ENCODE measurements at regions of chr14 and their contacts with region 1.

Region 1: DNA sequence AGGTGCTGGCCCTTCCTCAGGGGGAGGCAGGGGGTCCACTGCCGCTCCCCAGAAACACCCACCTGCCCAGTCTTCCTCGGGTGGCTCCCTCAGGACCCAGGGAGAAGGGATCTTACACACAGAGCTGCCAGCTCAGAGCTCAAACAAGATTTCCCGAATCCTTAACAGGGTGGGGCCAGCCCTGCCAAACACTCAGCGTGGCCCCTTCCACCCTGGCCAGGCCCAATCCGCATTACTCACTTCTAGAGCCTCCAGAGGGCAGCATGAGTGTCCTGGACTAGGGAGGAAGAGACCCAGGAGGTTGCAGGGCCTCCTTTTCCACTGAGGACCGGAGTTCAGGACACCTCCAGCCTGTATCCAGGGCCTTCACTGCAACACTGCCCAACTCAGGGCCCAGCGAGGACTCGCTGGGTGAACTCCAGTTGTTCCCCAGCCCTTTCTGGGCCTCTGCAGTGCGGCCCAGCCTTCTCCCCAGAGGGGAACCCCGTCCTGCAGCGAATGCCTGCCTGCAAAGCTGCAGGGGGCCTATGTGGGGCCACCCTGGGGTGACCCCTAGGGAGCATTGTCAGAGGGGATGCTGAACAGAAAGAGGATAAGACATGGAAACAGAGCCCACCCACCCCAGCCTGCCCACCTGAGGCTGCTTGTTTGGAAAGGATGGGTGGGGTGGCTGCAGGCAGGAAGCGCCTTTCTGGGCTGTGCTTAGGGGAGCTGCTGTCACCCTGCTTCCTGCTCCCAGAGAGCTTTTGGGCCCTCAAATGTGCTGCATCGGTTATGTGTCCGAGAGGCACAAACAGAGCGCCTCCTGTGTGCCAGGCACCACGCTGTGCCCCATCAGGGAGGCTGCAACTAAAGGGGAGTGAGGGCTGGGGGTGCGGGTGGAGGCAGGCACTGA is 43.8 kb downstream of the CCNK start:
- DNase-seq: peak; percentile 78
- H3K4me3 ChIP-seq: no peak overlapping the region
- H3K27ac ChIP-seq: no peak overlapping the region
- H3K4me1 ChIP-seq: peaks cover 18% of the 10 kb centered on the region
- H3K27me3 ChIP-seq: no peaks in the 10 kb centered on the region

Region 2: DNA sequence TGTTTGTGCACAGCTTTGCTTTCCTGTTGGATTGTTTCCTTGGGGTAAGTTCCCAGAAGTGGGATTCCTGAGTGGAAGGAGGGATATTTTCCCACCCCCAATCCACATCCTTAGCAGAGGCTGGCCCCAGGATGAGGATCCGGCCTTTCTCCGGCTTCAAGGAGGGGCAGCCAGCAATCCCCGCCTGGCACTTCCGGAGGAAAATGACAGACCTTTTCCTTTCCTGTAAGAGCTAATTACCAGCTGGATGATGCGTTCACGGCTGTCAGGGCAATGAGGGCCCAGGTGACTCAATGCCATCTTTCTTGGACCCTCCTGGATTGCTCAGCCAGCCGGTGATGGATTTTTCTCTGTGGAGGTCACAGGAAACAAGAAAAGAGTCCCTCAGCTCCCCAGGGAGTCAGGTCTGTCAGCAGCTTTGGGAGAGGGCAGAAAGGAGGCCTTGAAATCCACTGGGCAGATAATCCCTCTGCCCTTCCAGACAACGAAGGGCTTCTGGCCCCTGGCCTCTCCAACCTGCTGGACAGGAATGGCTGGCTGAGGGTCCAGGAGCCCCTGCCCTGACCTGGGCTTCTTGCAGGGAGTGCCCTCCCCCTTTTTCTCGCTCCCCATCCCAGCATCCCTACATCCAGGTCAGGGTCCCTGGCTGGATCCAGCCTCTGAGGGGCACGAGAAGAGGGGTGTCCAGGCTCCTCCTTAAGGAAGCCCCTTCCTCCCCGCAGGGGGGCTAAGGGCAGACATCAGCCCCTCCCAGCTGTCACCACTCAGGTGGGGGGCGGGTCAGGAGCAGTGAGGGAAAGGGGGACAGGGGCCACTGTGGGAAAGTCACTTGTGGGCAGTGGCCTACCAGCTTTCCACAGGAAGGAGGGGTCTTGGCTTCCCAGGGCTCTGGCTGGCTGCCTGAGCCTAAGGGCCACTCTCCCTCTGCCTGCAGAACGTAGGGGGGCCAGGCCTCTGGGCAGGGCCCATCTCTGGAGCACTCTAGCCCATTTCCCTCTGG is 95.1 kb after region 1 on chr14:
- in situ Hi-C with region 1: loop called (anchors 5 kb)
- DNase-seq: peak; percentile 86
- H3K4me3 ChIP-seq: no peak overlapping the region
- H3K27ac ChIP-seq: peak overlapping the region; percentile 20
- H3K4me1 ChIP-seq: peaks cover 38% of the 10 kb centered on the region
- H3K27me3 ChIP-seq: no peaks in the 10 kb centered on the region

Region 3: GRCh38 chr14:99899578-99900178 is 374.6 kb after region 1 on chr14:
- in situ Hi-C with region 1: loop called (anchors 10 kb)
- DNase-seq: peak; percentile 47
- H3K4me3 ChIP-seq: no peak overlapping the region
- H3K27ac ChIP-seq: no peak overlapping the region
- H3K4me1 ChIP-seq: no peaks in the 10 kb centered on the region
- H3K27me3 ChIP-seq: no peaks in the 10 kb centered on the region

Measured in GM23248 (cell line).